ENCODE measurements at regions of chr2 and their contacts with region 1.

Region 1: GRCh38 chr2:173448938-173449471 is 94.3 kb downstream of the CDCA7 start:
- DNase-seq: peak in 34 of 35 experiments; percentile 10 to 71 (median 43)
- ATAC-seq: peak; percentile 39 to 67 (median 60)
- H3K4me3 ChIP-seq: no peak overlapping the region
- H3K4me3 Mint-ChIP-seq: peak overlapping the region; percentile 21 to 59 (median 32)
- H3K27ac ChIP-seq: no peak overlapping the region
- H3K27ac Mint-ChIP-seq: peak overlapping the region in 1 of 2 donors; percentile 64
- H3K4me1 ChIP-seq: peaks cover 0 to 10% of the 10 kb centered on the region in 2 experiments
- H3K4me1 Mint-ChIP-seq: peaks cover 17 to 25% (median 22%) of the 10 kb centered on the region in 3 donors
- H3K27me3 ChIP-seq: peaks cover 0 to 14% of the 10 kb centered on the region in 2 experiments
- H3K27me3 Mint-ChIP-seq: peaks cover 5 to 8% of the 10 kb centered on the region in 2 donors

Region 2: DNA sequence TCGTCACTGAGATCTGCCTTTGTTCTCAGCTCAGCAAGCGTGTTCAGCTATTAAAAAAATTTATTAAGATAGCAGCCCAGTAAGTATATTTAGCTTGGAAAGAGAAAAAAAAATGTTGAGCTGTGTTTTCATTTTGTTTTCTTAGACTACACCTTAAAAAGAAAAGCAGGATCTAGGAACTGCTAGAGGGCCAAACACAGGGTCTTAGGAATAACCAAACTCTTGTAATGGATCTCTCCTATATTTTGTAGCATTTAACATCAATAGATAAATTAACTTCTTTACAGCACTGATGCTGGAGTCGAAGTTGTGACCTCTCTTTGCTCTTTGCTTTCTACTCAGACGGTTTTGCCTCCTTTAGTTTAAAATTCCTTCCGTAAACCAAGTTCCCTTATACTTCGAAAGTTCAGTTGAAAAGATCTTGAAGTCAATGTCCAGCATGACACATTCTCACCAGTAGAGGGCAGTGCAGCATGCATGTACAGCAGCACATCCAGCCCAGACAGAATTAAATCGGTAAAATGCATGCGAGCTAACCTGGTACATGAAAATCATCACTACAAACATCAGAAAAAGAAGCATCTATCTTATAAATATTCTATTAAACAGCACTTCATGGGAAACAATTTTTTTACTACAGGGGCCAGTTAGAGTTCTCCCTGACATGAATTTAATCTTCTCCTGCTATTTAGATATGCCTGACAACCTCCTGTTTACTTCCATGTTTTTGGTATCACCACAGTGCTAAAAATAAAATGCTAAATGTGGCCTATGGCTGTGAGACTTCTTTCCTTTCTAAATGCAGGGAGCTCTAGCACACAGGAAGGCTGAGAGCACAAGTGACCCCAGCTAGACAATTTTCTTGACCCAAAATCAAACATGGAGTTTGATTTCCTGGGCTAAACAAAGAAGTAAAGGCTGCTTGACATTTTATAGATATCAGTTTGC is 421.6 kb before region 1 on chr2:
- CTCF ChIA-PET with region 1: interaction called in 1 of 2 experiments, 10 read pairs
- POLR2A ChIA-PET with region 1: no interaction called
- DNase-seq: peak; percentile 24 to 89 (median 60)
- ATAC-seq: peak; percentile 62 to 72 (median 68)
- H3K4me3 ChIP-seq: no peak overlapping the region
- H3K4me3 Mint-ChIP-seq: no peak overlapping the region
- H3K27ac ChIP-seq: no peak overlapping the region
- H3K27ac Mint-ChIP-seq: no peak overlapping the region
- H3K4me1 ChIP-seq: no peaks in the 10 kb centered on the region
- H3K4me1 Mint-ChIP-seq: peaks cover 0 to 7% (median 2%) of the 10 kb centered on the region in 3 donors
- H3K27me3 ChIP-seq: no peaks in the 10 kb centered on the region
- H3K27me3 Mint-ChIP-seq: peaks cover 5 to 17% of the 10 kb centered on the region in 2 donors

Region 3: GRCh38 chr2:173402405-173402974 is 46.5 kb before region 1 on chr2:
- CTCF ChIA-PET with region 1: interaction called in 1 of 2 experiments, 10 read pairs
- POLR2A ChIA-PET with region 1: no interaction called
- DNase-seq: peak; percentile 16 to 81 (median 57)
- ATAC-seq: peak; percentile 85 to 88 (median 88)
- H3K4me3 ChIP-seq: peak overlapping the region in 1 of 2 donors; percentile 25
- H3K4me3 Mint-ChIP-seq: no peak overlapping the region
- H3K27ac ChIP-seq: no peak overlapping the region
- H3K27ac Mint-ChIP-seq: no peak overlapping the region
- H3K4me1 ChIP-seq: peaks cover 0 to 6% of the 10 kb centered on the region in 2 experiments
- H3K4me1 Mint-ChIP-seq: peaks cover 4 to 11% (median 5%) of the 10 kb centered on the region in 3 donors
- H3K27me3 ChIP-seq: peaks cover 6 to 18% of the 10 kb centered on the region in 2 experiments
- H3K27me3 Mint-ChIP-seq: peaks cover 53 to 58% of the 10 kb centered on the region in 2 donors

Region 4: DNA sequence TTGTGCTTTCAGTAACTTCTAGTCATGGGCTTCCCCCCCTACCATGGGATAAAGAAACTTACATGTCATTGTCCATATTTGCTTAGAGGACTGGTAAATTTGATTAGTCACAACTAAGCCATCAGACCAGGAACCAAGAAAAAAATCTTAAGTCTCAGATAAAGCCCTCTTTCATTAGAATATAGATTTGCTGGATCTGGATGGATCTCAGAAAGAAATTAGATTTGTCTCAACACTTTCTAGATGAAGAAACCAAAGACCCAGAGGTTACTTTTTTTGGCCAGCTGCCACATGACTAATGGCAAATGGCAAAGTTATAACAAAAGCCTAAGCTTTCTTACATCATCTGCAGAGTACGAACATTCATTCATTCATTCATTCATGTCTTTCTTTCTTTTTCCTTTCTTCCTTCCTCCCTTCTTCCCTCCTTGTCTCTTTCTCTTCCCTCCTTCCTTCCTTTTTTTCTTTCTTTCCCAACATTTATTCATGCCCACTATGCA is 34.1 kb before region 1 on chr2:
- CTCF ChIA-PET with region 1: no interaction called
- POLR2A ChIA-PET with region 1: interaction called in 1 of 2 experiments, 10 read pairs
- DNase-seq: no peak
- ATAC-seq: no peak
- H3K4me3 ChIP-seq: no peak overlapping the region
- H3K4me3 Mint-ChIP-seq: no peak overlapping the region
- H3K27ac ChIP-seq: no peak overlapping the region
- H3K27ac Mint-ChIP-seq: no peak overlapping the region
- H3K4me1 ChIP-seq: no peaks in the 10 kb centered on the region
- H3K4me1 Mint-ChIP-seq: no peaks in the 10 kb centered on the region
- H3K27me3 ChIP-seq: peaks cover 0 to 9% of the 10 kb centered on the region in 2 experiments
- H3K27me3 Mint-ChIP-seq: peaks cover 23 to 25% of the 10 kb centered on the region in 2 donors

Region 5: DNA sequence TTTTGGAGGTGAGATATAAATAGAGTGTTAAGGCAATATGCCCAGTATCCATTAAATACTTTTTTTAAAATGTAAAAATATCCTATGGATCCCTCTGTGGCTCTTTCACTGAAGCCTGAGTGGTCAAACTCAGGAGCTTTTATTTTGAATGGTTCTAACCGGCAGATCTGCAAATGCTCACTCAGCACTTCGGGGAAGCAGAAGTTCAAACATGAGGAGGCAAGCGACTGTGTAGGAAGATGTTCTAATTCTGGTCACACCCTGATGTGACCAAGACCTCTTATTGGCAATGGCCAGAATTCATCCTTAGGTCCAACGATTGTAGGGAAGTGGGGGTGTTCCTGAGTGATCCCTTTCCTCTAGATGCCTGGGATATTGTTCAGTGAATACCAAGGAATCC is 74.5 kb after region 1 on chr2:
- CTCF ChIA-PET with region 1: no interaction called
- POLR2A ChIA-PET with region 1: no interaction called
- DNase-seq: no peak
- ATAC-seq: no peak
- H3K4me3 ChIP-seq: no peak overlapping the region
- H3K4me3 Mint-ChIP-seq: no peak overlapping the region
- H3K27ac ChIP-seq: no peak overlapping the region
- H3K27ac Mint-ChIP-seq: no peak overlapping the region
- H3K4me1 ChIP-seq: no peaks in the 10 kb centered on the region
- H3K4me1 Mint-ChIP-seq: no peaks in the 10 kb centered on the region
- H3K27me3 ChIP-seq: no peaks in the 10 kb centered on the region
- H3K27me3 Mint-ChIP-seq: peaks cover 2 to 26% of the 10 kb centered on the region in 2 donors

Region 6: GRCh38 chr2:173584673-173585458 is 135.9 kb after region 1 on chr2:
- CTCF ChIA-PET with region 1: no interaction called
- POLR2A ChIA-PET with region 1: no interaction called
- DNase-seq: no peak
- ATAC-seq: no peak
- H3K4me3 ChIP-seq: no peak overlapping the region
- H3K4me3 Mint-ChIP-seq: no peak overlapping the region
- H3K27ac ChIP-seq: no peak overlapping the region
- H3K27ac Mint-ChIP-seq: no peak overlapping the region
- H3K4me1 ChIP-seq: no peaks in the 10 kb centered on the region
- H3K4me1 Mint-ChIP-seq: no peaks in the 10 kb centered on the region
- H3K27me3 ChIP-seq: peaks cover 0 to 3% of the 10 kb centered on the region in 2 experiments
- H3K27me3 Mint-ChIP-seq: peaks cover 10 to 27% of the 10 kb centered on the region in 2 donors

Region 7: GRCh38 chr2:175414882-175415487 is 1966.0 kb after region 1 on chr2:
- CTCF ChIA-PET with region 1: no interaction called
- POLR2A ChIA-PET with region 1: no interaction called
- DNase-seq: peak in 4 of 35 experiments; percentile 0 to 11 (median 1)
- ATAC-seq: no peak
- H3K4me3 ChIP-seq: no peak overlapping the region
- H3K4me3 Mint-ChIP-seq: no peak overlapping the region
- H3K27ac ChIP-seq: no peak overlapping the region
- H3K27ac Mint-ChIP-seq: no peak overlapping the region
- H3K4me1 ChIP-seq: no peaks in the 10 kb centered on the region
- H3K4me1 Mint-ChIP-seq: no peaks in the 10 kb centered on the region
- H3K27me3 ChIP-seq: no peaks in the 10 kb centered on the region
- H3K27me3 Mint-ChIP-seq: peaks cover 0 to 7% of the 10 kb centered on the region in 2 donors